HepG2 (cell line): ENCODE measurements at regions of chr10 and their contacts with region 1.

Region 1: GRCh38 chr10:96124230-96125141 is 5.6 kb upstream of the ZNF518A start:
- DNase-seq: peak; percentile 74
- ATAC-seq: peak; percentile 98
- H3K4me3 ChIP-seq: peak overlapping the region; percentile 64 to 81 (median 66)
- H3K27ac ChIP-seq: peak overlapping the region; percentile 93
- H3K4me1 ChIP-seq: peaks cover 35% of the 10 kb centered on the region
- H3K27me3 ChIP-seq: no peaks in the 10 kb centered on the region; a peak in 1 of 5 replicates
- CTCF ChIP-seq: no peak
- EP300 ChIP-seq: no peak
- POLR2A ChIP-seq: peak; percentile 67 to 78
- RAD21 ChIP-seq: peak; percentile 13; the same call in 1 of the 2 replicates

Region 2: DNA sequence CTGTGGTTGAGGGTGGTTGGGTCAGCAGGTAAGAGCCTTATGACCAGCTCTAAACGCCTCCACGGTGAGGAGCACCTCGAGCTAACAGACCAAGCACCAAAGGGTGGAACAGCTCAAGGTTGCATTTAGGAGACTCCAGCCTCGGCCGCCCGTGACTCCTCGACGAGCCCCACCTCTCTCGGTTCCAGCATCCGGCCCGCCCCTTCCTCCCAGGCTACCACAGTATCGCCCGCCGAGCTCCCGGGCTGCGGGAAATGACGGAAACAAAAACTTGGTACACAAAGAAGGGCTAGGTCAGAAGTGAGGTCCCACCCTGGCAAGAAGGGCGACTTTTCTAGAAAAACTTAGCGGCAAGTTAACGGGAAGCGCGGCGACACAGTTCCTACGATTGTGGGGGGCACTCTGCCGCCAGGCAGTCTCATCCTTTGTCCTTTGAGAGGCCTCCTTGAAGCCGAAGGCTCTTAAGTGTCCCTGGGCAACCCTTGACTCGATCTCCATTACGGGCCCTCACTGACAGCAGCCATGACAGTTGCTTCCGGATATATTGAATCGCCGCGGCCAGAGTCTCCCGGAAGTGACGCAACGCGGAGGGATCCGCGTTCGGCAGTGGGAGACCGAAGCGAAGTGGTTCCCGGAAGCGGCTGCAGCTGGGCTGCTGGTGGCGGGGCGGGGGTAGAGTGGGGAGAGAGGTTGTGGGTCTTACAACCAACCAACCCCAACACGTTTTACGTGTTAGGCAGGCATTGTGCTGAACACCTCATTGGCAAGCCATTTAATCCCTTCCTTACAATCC is 34.6 kb before region 1 on chr10:
- CTCF ChIA-PET with region 1: no interaction called
- POLR2A ChIA-PET with region 1: interaction called, 325 read pairs
- in situ Hi-C with region 1: loop called (anchors 5 kb)
- intact Hi-C with region 1: loop called (anchors 2 kb)
- DNase-seq: peak; percentile 93
- ATAC-seq: peak; percentile 89
- H3K4me3 ChIP-seq: peak overlapping the region; percentile 60 to 90 (median 88)
- H3K27ac ChIP-seq: peak overlapping the region; percentile 100
- H3K4me1 ChIP-seq: peaks cover 60% of the 10 kb centered on the region
- H3K27me3 ChIP-seq: no peaks in the 10 kb centered on the region; a peak in 1 of 5 replicates
- CTCF ChIP-seq: 0 out of 2 replicates have a peak, but pooled peaks have one; percentile 22
- EP300 ChIP-seq: peak; percentile 39 to 57; a peak in 3 of 4 replicates
- POLR2A ChIP-seq: peak; percentile 71 to 78
- RAD21 ChIP-seq: peak; percentile 48